ENCODE measurements at regions of chr3 and their contacts with region 1.

Region 1: GRCh38 chr3:142154176-142154575 is 4.8 kb upstream of the TFDP2 start:
- DNase-seq: no peak
- ATAC-seq: no peak
- H3K4me3 ChIP-seq: no peak overlapping the region
- H3K27ac ChIP-seq: no peak overlapping the region
- H3K4me1 ChIP-seq: peaks cover 2% of the 10 kb centered on the region
- H3K27me3 ChIP-seq: no peaks in the 10 kb centered on the region
- CTCF ChIP-seq: no peak
- POLR2A ChIP-seq: no peak
- RAD21 ChIP-seq: no peak

Region 2: GRCh38 chr3:142129516-142130171 is 24.5 kb before region 1 on chr3:
- CTCF ChIA-PET with region 1: no interaction called
- POLR2A ChIA-PET with region 1: no interaction called
- dilution Hi-C with region 1: no loop called
- in situ Hi-C with region 1: no loop called
- intact Hi-C with region 1: loop called (anchors 1 kb)
- DNase-seq: no peak
- ATAC-seq: no peak
- H3K4me3 ChIP-seq: no peak overlapping the region
- H3K27ac ChIP-seq: no peak overlapping the region
- H3K4me1 ChIP-seq: no peaks in the 10 kb centered on the region
- H3K27me3 ChIP-seq: no peaks in the 10 kb centered on the region
- CTCF ChIP-seq: peak; percentile 25; the same call in 1 of the 2 replicates
- POLR2A ChIP-seq: no peak
- RAD21 ChIP-seq: no peak